Uterus (tissue), 4 donors: ENCODE measurements at regions of chr6 and their contacts with region 1.

Region 1: GRCh38 chr6:43496370-43497128 is 13.6 kb downstream of the LRRC73 start:
- DNase-seq: no peak
- H3K4me3 ChIP-seq: no peak overlapping the region
- H3K27ac ChIP-seq: peak overlapping the region in 1 of 2 donors; percentile 23
- H3K4me1 ChIP-seq: peaks cover 0 to 21% of the 10 kb centered on the region in 2 donors
- H3K27me3 ChIP-seq: no peaks in the 10 kb centered on the region
- CTCF ChIP-seq: peak; percentile 25 to 42 (median 28)
- POLR2A ChIP-seq: no peak

Region 2: DNA sequence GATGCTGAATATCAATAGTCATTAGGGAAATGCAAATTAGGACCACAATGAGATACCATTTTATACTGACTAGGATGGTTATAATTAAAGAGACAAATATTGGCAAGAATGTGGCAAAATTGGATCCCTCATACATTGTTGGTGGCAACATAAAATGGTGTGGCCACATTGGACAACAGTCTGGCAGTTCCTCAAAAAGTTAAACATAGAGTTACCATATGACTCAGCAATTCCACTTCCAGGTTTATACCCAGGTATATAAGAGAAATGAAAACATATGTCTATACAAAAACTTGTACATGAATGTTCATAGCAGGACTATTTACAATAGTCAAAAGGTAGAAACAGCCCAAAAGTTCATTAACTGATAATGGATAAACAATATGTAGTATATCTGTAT is 185.9 kb before region 1 on chr6:
- intact Hi-C with region 1: no loop called
- DNase-seq: no peak
- H3K4me3 ChIP-seq: no peak overlapping the region
- H3K27ac ChIP-seq: no peak overlapping the region
- H3K4me1 ChIP-seq: peaks cover 0 to 5% of the 10 kb centered on the region in 2 donors
- H3K27me3 ChIP-seq: no peaks in the 10 kb centered on the region
- CTCF ChIP-seq: no peak
- POLR2A ChIP-seq: no peak

Region 3: GRCh38 chr6:43369174-43370022 is 127.2 kb before region 1 on chr6 and contains the start of gene ZNF318:
- intact Hi-C with region 1: loop called (anchors 10 kb)
- DNase-seq: peak; percentile 95 to 97
- H3K4me3 ChIP-seq: peak within 1 kb of the TSS; percentile 63 to 78
- H3K27ac ChIP-seq: peak within 1 kb of the TSS; percentile 82 to 83
- H3K4me1 ChIP-seq: no peaks in the 10 kb centered on the region
- H3K27me3 ChIP-seq: no peaks in the 10 kb centered on the region
- CTCF ChIP-seq: peak in 1 of 4 experiments; percentile 5
- POLR2A ChIP-seq: peak; percentile 40 to 53
- total RNA-seq, gene ZNF318: 3.8 to 38.0 (median 24.0) TPM